Activated CD4-positive, alpha-beta memory T cell treated with anti-CD3 and anti-CD28 coated beads, Interleukin-2, amount 10 ng/mL, durations not matched to agents 7 days and 5 days (primary cell): ENCODE measurements at regions of chr17 and their contacts with region 1.

Region 1: GRCh38 chr17:68533887-68534694 is 21.9 kb downstream of the PRKAR1A start:
- DNase-seq: no peak
- H3K4me3 Mint-ChIP-seq: no peak overlapping the region
- H3K27ac Mint-ChIP-seq: no peak overlapping the region
- H3K4me1 Mint-ChIP-seq: peaks cover 14% of the 10 kb centered on the region
- H3K27me3 Mint-ChIP-seq: no peaks in the 10 kb centered on the region

Region 2: DNA sequence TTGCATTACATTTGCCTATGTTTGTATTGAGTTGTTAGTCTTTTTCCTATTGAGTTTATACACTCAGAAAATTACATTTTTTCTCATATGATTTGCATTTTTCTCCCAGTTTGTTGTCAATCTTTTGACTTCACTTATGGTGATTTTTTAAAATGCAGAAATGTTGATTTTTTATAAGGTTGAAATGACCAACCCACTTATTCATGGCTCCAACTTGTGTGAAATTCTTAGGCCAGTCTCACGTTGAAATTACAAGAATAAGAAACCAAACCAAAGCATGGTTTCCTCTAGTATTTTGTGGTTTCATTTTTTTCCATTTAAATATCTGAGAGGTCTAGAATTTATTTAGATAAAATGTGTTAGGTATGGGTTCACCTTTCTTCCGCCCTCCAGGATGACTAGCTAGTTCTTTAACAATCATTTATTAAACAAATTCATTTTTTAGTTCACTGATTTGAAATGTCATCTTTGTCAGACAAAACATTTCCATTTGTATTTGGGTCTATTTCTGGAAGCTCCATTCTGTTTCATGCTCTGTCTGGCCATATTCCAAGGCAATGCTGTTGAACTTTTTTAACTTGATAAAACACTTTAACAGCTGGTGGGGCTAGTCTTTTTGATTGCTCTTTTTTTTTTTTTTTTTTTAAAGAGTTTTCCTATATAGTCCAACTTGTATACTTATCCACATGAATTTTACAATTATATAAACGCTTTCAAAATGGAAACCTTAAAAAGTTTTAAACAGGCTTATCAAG is 27.1 kb after region 1 on chr17:
- CTCF ChIA-PET with region 1: no interaction called
- POLR2A ChIA-PET with region 1: no interaction called
- DNase-seq: no peak
- H3K4me3 Mint-ChIP-seq: no peak overlapping the region
- H3K27ac Mint-ChIP-seq: no peak overlapping the region
- H3K4me1 Mint-ChIP-seq: no peaks in the 10 kb centered on the region
- H3K27me3 Mint-ChIP-seq: peaks cover 7% of the 10 kb centered on the region

Region 3: DNA sequence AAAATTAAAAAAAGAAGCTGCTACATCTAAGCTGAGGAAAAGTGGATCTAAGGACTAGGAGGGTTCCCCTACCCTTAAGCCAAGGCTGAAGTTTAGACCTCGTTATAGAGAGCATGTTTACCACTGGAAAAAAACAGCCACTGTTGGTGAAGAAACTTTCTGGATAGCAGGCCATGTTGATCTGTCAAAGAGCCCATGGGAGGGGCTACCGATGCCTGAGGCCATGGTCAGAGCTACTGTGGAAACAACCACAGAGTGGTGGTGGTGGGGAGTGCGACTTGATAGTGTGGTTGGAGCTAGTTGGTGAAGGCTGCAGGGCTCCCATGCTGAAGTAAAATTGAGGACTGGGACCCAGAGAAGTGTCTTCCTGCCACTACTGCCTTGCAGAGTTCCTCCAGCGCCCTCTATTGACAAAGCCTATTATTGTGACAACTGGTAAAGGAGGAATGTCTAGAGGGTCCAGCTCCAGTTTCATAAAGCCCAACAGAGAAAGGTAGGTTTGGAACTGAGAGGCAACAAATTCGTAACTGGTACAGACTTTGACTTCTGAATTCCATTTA is 79.7 kb after region 1 on chr17:
- CTCF ChIA-PET with region 1: interaction called, 21 read pairs
- POLR2A ChIA-PET with region 1: no interaction called
- DNase-seq: peak; percentile 38
- H3K4me3 Mint-ChIP-seq: no peak overlapping the region
- H3K27ac Mint-ChIP-seq: no peak overlapping the region
- H3K4me1 Mint-ChIP-seq: no peaks in the 10 kb centered on the region
- H3K27me3 Mint-ChIP-seq: peaks cover 26% of the 10 kb centered on the region